Naive thymus-derived CD4-positive, alpha-beta T cell (primary cell): ENCODE measurements at regions of chr7 and their contacts with region 1.

Region 1: GRCh38 chr7:56051339-56052191 is at the starts of genes CCT6A and PSPH:
- DNase-seq: peak; percentile 74 to 93 (median 78)
- ATAC-seq: peak; percentile 95
- H3K4me3 ChIP-seq: peak within 1 kb of the TSS; percentile 88
- H3K4me3 Mint-ChIP-seq: peak within 1 kb of the TSS; percentile 91 to 99 (median 96)
- H3K27ac ChIP-seq: peak within 1 kb of the TSS; percentile 91
- H3K27ac Mint-ChIP-seq: peak within 1 kb of the TSS; percentile 78 to 96 (median 93)
- H3K4me1 ChIP-seq: peaks cover 6 to 9% of the 10 kb centered on the region in 2 donors
- H3K4me1 Mint-ChIP-seq: peaks cover 26 to 59% (median 45%) of the 10 kb centered on the region in 7 donors
- H3K27me3 ChIP-seq: no peaks in the 10 kb centered on the region
- H3K27me3 Mint-ChIP-seq: no peaks in the 10 kb centered on the region
- total RNA-seq, gene CCT6A: 38.7 to 143 (median 58.6) TPM
- total RNA-seq, gene PSPH: 3.5 to 10.4 (median 6.5) TPM

Region 2: DNA sequence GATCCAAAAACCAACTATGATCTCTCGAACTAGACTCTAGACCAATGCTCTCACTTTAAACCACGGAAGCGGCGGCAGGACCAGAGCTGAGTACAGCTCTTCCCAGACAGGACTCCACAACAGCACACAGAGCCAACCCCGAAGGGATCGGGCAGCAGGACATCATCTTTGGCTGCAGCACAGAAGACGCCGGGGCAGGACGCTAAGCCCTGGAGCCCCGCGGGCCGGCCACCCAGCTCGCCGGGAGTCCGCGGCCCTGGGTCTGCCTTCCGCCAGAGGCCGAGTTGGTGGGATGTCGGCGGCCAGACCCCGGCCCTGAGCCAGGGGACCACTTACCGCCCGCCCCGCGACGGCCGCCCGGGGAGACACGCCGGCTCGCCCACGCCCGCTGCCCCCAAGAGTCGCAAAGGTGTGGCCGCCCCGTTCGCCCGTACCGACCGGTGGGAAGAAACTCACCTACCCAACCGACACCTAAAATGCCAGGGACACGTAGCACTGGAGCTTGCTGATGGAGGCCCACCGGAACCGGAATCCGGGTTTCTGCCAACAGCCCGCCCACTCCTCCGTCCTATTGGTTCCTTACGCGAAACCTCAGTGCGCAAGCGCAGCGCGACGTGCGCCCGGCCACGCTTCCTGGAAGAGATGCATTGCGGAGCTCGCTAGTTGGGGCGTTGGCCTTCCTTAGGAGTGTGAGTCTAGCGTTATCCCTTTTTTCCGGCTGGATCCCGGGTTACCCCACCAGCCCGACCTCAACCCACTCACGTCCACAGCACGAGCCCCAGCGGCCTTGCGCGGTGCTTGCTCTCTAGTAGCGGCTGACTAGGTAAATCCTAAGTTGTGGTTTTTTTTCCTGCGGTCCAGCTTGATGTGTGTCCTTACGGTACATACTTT is 1292.6 kb before region 1 on chr7 and contains the start of gene SEC61G:
- CTCF ChIA-PET with region 1: no interaction called
- POLR2A ChIA-PET with region 1: no interaction called
- intact Hi-C with region 1: loop called (anchors 5 kb)
- DNase-seq: peak; percentile 92 to 96 (median 94)
- ATAC-seq: peak; percentile 98
- H3K4me3 ChIP-seq: peak within 1 kb of the TSS; percentile 67
- H3K4me3 Mint-ChIP-seq: peak within 1 kb of the TSS; percentile 94 to 100 (median 100)
- H3K27ac ChIP-seq: peak within 1 kb of the TSS; percentile 83
- H3K27ac Mint-ChIP-seq: peak within 1 kb of the TSS; percentile 93 to 98 (median 96)
- H3K4me1 ChIP-seq: peaks cover 7 to 11% of the 10 kb centered on the region in 2 donors
- H3K4me1 Mint-ChIP-seq: peaks cover 15 to 54% (median 40%) of the 10 kb centered on the region in 7 donors
- H3K27me3 ChIP-seq: no peaks in the 10 kb centered on the region
- H3K27me3 Mint-ChIP-seq: peaks cover 0 to 21% (median 5%) of the 10 kb centered on the region in 5 donors
- total RNA-seq, gene SEC61G: 31.8 to 174 (median 46.6) TPM

Region 3: GRCh38 chr7:54992871-54993490 is 1058.6 kb before region 1 on chr7:
- CTCF ChIA-PET with region 1: no interaction called
- POLR2A ChIA-PET with region 1: no interaction called
- intact Hi-C with region 1: no loop called
- DNase-seq: no peak
- ATAC-seq: no peak
- H3K4me3 ChIP-seq: no peak overlapping the region
- H3K4me3 Mint-ChIP-seq: no peak overlapping the region
- H3K27ac ChIP-seq: no peak overlapping the region
- H3K27ac Mint-ChIP-seq: no peak overlapping the region
- H3K4me1 ChIP-seq: no peaks in the 10 kb centered on the region
- H3K4me1 Mint-ChIP-seq: peaks cover 10 to 20% (median 17%) of the 10 kb centered on the region in 7 donors
- H3K27me3 ChIP-seq: no peaks in the 10 kb centered on the region
- H3K27me3 Mint-ChIP-seq: peaks cover 0 to 11% (median 0%) of the 10 kb centered on the region in 5 donors

Region 4: DNA sequence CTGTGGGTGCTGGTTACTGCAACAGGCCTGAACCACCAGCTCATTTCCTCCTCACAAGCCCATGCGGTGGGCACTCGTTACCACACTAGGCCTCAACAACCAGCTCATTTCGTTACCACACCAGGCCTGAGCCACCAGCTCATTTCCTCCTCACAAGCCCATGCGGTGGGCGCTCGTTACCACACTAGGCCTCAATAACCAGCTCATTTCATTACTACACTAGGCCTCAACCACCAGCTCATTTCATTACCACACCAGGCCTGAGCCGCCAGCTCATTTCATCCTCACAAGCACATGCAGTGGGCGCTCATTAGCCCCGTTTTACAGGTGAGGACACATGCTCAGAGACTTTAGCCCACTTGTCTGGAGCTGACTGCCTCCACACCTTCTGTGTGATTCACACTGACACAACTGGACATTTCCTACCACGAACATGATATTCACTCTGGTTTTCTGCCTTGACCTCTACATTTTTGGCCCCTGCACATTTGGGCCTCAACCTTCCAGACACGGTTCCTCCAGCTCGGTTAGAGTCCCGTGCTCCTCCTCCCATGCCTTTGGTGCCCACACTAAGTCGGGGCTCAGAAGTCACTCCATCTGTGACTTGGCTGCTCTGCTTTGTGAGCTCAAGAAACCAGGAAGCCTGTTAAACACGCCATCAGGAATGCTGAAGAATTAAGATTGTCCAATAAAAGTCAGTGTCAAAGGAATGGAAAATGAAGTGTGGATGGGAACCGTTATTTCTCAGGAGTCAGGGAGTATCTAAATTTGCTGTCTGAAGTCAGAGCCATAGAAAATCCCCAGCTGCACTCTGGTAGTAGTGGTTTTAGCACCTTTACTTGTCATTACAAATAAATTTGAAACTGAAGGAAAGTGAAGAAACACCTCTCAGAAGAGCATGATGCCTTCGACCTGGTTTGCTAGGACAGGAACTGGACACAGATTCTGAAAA is 742.2 kb before region 1 on chr7:
- CTCF ChIA-PET with region 1: no interaction called
- POLR2A ChIA-PET with region 1: no interaction called
- intact Hi-C with region 1: no loop called
- DNase-seq: peak in 2 of 9 donors; percentile 10 to 61
- ATAC-seq: peak; percentile 85
- H3K4me3 ChIP-seq: no peak overlapping the region
- H3K4me3 Mint-ChIP-seq: peak overlapping the region in 1 of 10 donors; percentile 52
- H3K27ac ChIP-seq: no peak overlapping the region
- H3K27ac Mint-ChIP-seq: peak overlapping the region in 1 of 9 donors; percentile 74
- H3K4me1 ChIP-seq: peaks cover 0 to 41% of the 10 kb centered on the region in 2 donors
- H3K4me1 Mint-ChIP-seq: peaks cover 0 to 33% (median 0%) of the 10 kb centered on the region in 7 donors
- H3K27me3 ChIP-seq: no peaks in the 10 kb centered on the region
- H3K27me3 Mint-ChIP-seq: peaks cover 0 to 10% (median 6%) of the 10 kb centered on the region in 5 donors

Region 5: DNA sequence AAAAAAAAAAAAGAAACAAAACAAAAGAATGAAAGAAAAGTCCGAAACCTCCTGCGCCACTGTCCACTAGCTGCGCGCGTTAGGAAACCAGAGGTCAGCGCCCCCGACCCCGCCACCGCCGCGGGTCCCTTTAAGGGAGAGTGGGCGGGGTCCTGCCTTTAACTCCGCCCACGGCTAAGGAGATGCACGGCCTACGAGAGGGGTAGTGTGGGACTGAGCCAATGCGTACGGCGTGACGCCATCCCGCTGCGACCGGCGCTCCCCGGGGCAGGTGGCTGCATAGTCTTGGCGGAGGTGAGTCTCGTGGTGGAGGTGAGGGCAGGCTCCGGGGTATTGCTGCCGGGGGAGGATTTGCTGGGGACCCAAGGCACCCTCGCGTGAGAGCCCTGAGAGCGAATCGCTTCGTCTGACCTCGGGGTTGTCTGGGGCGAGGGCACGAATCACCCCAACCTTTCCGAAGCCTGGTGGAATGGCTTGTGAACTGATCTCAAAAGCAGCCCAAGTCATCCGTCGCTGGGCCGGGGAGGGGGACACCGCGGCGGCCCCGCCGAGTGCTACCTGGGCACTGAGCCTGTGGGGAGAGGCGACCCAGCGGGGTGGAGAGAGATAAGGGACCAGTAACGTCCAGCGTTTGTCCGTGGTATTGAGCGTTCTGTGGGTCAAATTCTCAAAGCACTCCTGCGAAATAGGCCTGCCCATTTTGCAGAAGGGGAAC is 99.8 kb before region 1 on chr7 and contains the start of gene MRPS17:
- CTCF ChIA-PET with region 1: no interaction called
- POLR2A ChIA-PET with region 1: no interaction called
- intact Hi-C with region 1: loop called (anchors 1 kb)
- DNase-seq: peak; percentile 86 to 96 (median 94)
- ATAC-seq: peak; percentile 100
- H3K4me3 ChIP-seq: peak within 1 kb of the TSS; percentile 68
- H3K4me3 Mint-ChIP-seq: peak within 1 kb of the TSS; percentile 84 to 99 (median 96)
- H3K27ac ChIP-seq: peak within 1 kb of the TSS; percentile 86
- H3K27ac Mint-ChIP-seq: peak within 1 kb of the TSS; percentile 92 to 98 (median 96)
- H3K4me1 ChIP-seq: peaks cover 0 to 4% of the 10 kb centered on the region in 2 donors
- H3K4me1 Mint-ChIP-seq: peaks cover 10 to 33% (median 24%) of the 10 kb centered on the region in 7 donors
- H3K27me3 ChIP-seq: no peaks in the 10 kb centered on the region
- H3K27me3 Mint-ChIP-seq: peaks cover 0 to 2% (median 0%) of the 10 kb centered on the region in 5 donors
- total RNA-seq, gene MRPS17: 8.3 to 16.7 (median 12.0) TPM

Region 6: GRCh38 chr7:56009695-56010094 is 41.9 kb before region 1 on chr7:
- CTCF ChIA-PET with region 1: interaction called, 5 read pairs
- POLR2A ChIA-PET with region 1: no interaction called
- intact Hi-C with region 1: loop called (anchors 1 kb)
- DNase-seq: no peak
- ATAC-seq: no peak
- H3K4me3 ChIP-seq: no peak overlapping the region
- H3K4me3 Mint-ChIP-seq: no peak overlapping the region
- H3K27ac ChIP-seq: no peak overlapping the region
- H3K27ac Mint-ChIP-seq: no peak overlapping the region
- H3K4me1 ChIP-seq: no peaks in the 10 kb centered on the region
- H3K4me1 Mint-ChIP-seq: peaks cover 0 to 3% (median 0%) of the 10 kb centered on the region in 7 donors
- H3K27me3 ChIP-seq: no peaks in the 10 kb centered on the region
- H3K27me3 Mint-ChIP-seq: no peaks in the 10 kb centered on the region

Region 7: DNA sequence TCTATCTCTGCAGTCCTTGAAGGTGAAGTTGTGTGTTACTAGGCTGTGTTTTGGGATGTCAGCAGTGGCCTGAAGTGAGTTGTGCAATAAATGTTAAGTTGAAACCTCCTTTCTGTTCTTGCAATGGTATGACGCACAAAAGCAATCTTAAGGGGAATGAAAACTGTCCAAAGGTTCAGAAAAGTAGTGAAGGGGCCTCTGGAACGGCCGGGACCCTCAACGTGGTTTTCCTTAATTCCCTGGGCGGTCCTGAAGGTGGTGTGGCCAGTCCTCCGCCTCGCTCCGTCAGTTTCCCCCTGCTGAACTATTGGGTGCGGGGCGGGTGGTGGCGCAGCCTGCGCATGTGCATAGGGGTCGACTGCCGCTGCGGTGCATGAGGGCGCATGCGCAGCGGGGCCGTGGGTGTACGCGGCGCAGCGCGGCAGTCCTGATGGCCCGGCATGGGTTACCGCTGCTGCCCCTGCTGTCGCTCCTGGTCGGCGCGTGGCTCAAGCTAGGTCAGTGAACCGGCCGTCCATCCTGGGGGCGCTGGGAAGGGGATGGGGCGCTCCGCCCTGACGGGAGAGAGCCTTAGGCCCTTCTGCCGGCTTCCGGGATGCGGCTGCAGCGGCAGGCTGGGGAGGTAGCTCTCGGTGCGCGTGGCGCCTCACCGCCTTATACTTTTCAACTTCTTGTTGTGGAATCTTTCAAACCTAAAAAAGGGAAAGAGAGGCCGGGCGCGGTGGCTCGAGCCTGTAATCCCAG is 12.5 kb after region 1 on chr7 and contains the start of gene SUMF2:
- CTCF ChIA-PET with region 1: no interaction called
- POLR2A ChIA-PET with region 1: interaction called, 37 read pairs
- intact Hi-C with region 1: loop called (anchors 1 kb)
- DNase-seq: peak; percentile 86 to 96 (median 93)
- ATAC-seq: peak; percentile 96
- H3K4me3 ChIP-seq: peak within 1 kb of the TSS; percentile 98
- H3K4me3 Mint-ChIP-seq: peak within 1 kb of the TSS; percentile 83 to 95 (median 92)
- H3K27ac ChIP-seq: peak within 1 kb of the TSS; percentile 88
- H3K27ac Mint-ChIP-seq: peak within 1 kb of the TSS; percentile 93 to 98 (median 96)
- H3K4me1 ChIP-seq: peaks cover 7 to 8% of the 10 kb centered on the region in 2 donors
- H3K4me1 Mint-ChIP-seq: peaks cover 16 to 37% (median 22%) of the 10 kb centered on the region in 7 donors
- H3K27me3 ChIP-seq: no peaks in the 10 kb centered on the region
- H3K27me3 Mint-ChIP-seq: peaks cover 0 to 2% (median 0%) of the 10 kb centered on the region in 5 donors
- total RNA-seq, gene SUMF2: 120 to 176 (median 122) TPM

Region 8: DNA sequence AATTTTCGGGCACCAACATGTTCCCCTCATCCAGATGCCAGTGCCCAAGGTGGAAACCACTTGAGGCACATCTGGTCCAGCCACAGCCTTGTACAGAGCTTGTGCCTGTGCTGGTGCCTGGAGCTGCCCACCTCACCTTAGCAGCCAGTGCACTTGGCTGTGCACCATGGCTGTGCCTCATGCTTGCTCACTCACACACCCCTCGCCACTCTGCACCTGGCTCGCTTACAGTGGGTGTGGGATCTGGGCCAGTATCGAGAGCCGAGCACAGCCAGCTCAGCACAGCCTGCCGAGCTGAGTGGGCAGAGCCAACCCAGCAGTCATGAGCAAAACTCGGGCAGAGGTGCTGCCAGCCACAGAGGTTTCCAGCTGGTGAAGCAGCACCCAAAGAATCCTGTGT is 204.5 kb after region 1 on chr7:
- CTCF ChIA-PET with region 1: no interaction called
- POLR2A ChIA-PET with region 1: no interaction called
- intact Hi-C with region 1: no loop called
- DNase-seq: no peak
- ATAC-seq: no peak
- H3K4me3 ChIP-seq: no peak overlapping the region
- H3K4me3 Mint-ChIP-seq: no peak overlapping the region
- H3K27ac ChIP-seq: no peak overlapping the region
- H3K27ac Mint-ChIP-seq: no peak overlapping the region
- H3K4me1 ChIP-seq: no peaks in the 10 kb centered on the region
- H3K4me1 Mint-ChIP-seq: no peaks in the 10 kb centered on the region
- H3K27me3 ChIP-seq: no peaks in the 10 kb centered on the region
- H3K27me3 Mint-ChIP-seq: peaks cover 0 to 4% (median 0%) of the 10 kb centered on the region in 5 donors